GM10248 (cell line): ENCODE measurements at regions of chr14 and their contacts with region 1.

Region 1: DNA sequence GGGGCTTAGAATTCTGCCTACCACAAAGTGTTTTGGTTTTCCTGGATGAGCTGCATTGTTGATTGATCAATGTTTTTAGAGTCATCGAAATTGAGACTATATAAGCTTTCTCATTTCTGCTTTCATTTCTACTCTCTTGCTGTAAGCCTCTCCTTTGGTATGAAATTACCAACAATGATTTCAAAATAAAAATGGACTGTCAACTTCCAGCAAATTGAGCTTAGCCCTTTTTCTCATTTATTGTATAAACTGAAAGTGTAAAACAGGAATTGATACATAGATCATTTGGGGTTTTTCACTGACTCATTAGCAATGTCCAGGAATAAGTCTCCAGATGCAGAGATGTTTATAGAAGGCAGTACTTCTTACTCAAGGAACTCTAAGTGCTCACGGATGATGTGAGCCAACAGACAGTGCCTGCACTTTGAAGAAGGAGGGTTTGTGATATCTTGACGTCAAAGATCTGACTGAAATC is 20.0 kb upstream of the PCNX1 start:
- DNase-seq: no peak
- CTCF ChIP-seq: no peak

Region 2: DNA sequence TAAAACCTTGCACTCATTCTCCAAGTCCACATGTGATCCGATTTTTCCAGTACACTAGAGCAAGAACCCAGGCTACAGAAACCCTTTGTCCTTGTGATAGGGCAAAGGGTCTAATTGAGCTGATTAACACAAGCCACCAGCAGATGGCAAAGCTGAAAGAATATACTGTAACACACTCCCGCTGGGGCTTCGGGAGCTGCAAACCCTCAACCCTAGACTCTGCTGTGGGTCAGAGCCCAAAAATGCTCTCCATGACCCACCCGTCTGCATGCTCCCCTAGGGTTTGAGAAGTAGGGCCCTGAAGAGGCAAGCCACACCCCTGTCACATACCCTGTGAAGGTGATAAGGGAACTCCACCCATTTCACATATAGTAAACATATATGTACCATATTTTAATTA is 13.6 kb before region 1 on chr14:
- CTCF ChIA-PET with region 1: interaction called, 49 read pairs
- POLR2A ChIA-PET with region 1: no interaction called
- DNase-seq: no peak
- CTCF ChIP-seq: no peak